Mammary epithelial cell (primary cell): ENCODE measurements at regions of chr12 and their contacts with region 1.

Region 1: GRCh38 chr12:108731105-108731865 is at the start of gene CORO1C:
- DNase-seq: peak; percentile 95
- H3K4me3 ChIP-seq: peak within 1 kb of the TSS; percentile 87 to 99 (median 98)
- H3K27ac ChIP-seq: peak within 1 kb of the TSS; percentile 99
- H3K4me1 ChIP-seq: peaks cover 37% of the 10 kb centered on the region
- H3K27me3 ChIP-seq: no peaks in the 10 kb centered on the region
- CTCF ChIP-seq: peak; percentile 75 to 88
- total RNA-seq, gene CORO1C: 173 to 245 TPM

Region 2: GRCh38 chr12:108664338-108665258 is 66.7 kb before region 1 on chr12:
- CTCF ChIA-PET with region 1: no interaction called
- dilution Hi-C with region 1: loop called (anchors 10 kb)
- in situ Hi-C with region 1: no loop called
- intact Hi-C with region 1: loop called (anchors 1 kb)
- DNase-seq: peak; percentile 90
- H3K4me3 ChIP-seq: no peak overlapping the region
- H3K27ac ChIP-seq: peak overlapping the region; percentile 75
- H3K4me1 ChIP-seq: peaks cover 21% of the 10 kb centered on the region
- H3K27me3 ChIP-seq: no peaks in the 10 kb centered on the region
- CTCF ChIP-seq: peak; percentile 97 to 98

Region 3: DNA sequence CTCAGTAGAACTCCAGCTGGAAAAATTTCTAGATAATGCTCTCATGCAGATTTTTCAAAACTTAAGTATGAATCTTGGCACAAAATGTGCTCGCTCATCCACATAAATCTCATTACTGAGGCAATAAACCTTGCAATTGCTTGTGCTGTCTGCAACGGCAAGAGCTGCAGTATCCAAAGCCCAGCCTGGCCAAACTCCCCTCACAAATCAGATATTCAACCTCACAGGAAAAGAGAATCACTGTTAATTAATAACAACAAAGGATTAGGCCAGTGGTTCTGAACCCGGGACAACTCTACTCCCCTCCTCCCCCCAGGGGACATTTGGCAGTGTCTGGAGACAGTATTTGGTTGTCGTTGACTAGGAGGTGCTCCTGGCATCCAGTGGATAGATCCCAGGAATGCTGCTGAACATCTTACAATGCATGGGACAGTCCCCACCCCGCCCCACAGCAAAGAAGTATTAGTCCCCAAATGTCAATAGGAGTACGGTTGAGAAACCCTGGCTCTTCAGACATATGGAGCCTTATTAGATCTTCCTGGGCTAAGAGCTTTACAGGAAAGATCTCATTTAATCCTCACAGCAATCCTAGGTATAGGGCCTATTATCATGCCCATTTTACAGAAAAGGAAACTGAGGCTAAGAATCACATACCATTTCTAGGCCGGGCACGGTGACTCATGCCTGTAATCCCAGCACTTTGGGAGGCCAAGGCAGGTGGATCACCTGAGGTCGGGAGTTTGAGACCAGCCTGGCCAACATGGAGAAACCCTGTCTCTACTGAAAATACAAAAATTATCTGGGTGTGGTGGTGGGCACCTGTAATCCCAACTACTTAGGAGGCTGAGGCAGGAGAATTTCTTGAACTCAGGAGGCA is 19.5 kb after region 1 on chr12:
- CTCF ChIA-PET with region 1: no interaction called
- dilution Hi-C with region 1: no loop called
- in situ Hi-C with region 1: no loop called
- intact Hi-C with region 1: loop called (anchors 2 kb)
- DNase-seq: no peak
- H3K4me3 ChIP-seq: no peak overlapping the region
- H3K27ac ChIP-seq: no peak overlapping the region
- H3K4me1 ChIP-seq: no peaks in the 10 kb centered on the region
- H3K27me3 ChIP-seq: no peaks in the 10 kb centered on the region
- CTCF ChIP-seq: no peak

Region 4: GRCh38 chr12:108773798-108774788 is 42.8 kb after region 1 on chr12:
- CTCF ChIA-PET with region 1: no interaction called
- dilution Hi-C with region 1: loop called (anchors 5 kb)
- in situ Hi-C with region 1: no loop called
- intact Hi-C with region 1: loop called (anchors 1 kb)
- DNase-seq: peak; percentile 91
- H3K4me3 ChIP-seq: no peak overlapping the region
- H3K27ac ChIP-seq: peak overlapping the region; percentile 59
- H3K4me1 ChIP-seq: peaks cover 20% of the 10 kb centered on the region
- H3K27me3 ChIP-seq: no peaks in the 10 kb centered on the region
- CTCF ChIP-seq: no peak

Region 5: DNA sequence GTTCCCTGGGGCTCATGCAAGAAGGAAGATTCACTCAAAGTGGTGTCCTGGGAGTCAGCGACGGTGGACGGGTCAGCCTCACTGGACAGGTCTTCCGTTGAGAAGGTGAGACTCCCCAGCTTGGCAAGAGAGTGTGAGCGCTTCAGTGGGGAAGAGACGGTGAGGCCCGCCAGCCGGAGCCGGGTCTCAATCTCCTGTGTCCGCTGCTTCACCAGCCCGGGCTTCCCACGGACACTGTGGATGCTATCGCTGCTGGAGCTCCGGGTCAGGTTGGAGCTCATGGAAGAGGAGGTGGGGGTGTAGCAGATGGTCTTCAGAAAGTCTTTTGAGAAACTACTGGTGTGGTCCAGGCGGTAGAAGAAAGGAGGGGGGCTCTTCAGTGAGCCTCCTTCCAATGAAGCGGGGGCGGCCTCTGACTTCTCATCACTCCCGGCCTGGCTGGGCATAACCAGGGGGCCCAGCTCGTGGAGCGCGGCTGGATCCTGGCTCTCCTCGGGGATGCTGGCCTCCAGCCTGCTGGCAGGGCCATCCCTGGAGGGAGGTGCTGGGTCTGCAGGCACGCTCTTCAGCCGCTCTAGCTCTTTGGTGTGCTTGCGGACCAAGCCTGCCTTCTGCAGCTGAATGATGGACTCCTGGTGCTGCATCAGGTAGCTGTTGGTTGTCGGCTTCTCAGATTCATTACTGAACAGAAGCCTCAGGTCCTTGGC is 56.9 kb after region 1 on chr12:
- CTCF ChIA-PET with region 1: no interaction called
- dilution Hi-C with region 1: no loop called
- in situ Hi-C with region 1: no loop called
- intact Hi-C with region 1: no loop called
- DNase-seq: no peak
- H3K4me3 ChIP-seq: no peak overlapping the region
- H3K27ac ChIP-seq: no peak overlapping the region
- H3K4me1 ChIP-seq: no peaks in the 10 kb centered on the region
- H3K27me3 ChIP-seq: no peaks in the 10 kb centered on the region
- CTCF ChIP-seq: no peak

Region 6: GRCh38 chr12:108856428-108857157 is 125.3 kb after region 1 on chr12:
- CTCF ChIA-PET with region 1: no interaction called
- dilution Hi-C with region 1: no loop called
- in situ Hi-C with region 1: no loop called
- intact Hi-C with region 1: loop called (anchors 1 kb)
- DNase-seq: peak; percentile 73
- H3K4me3 ChIP-seq: peak overlapping the region; percentile 83 to 94 (median 91)
- H3K27ac ChIP-seq: peak overlapping the region; percentile 97
- H3K4me1 ChIP-seq: peaks cover 28% of the 10 kb centered on the region
- H3K27me3 ChIP-seq: no peaks in the 10 kb centered on the region
- CTCF ChIP-seq: no peak